CD8-positive, alpha-beta T cell (primary cell): ENCODE measurements at regions of chr6 and their contacts with region 1.

Region 1: DNA sequence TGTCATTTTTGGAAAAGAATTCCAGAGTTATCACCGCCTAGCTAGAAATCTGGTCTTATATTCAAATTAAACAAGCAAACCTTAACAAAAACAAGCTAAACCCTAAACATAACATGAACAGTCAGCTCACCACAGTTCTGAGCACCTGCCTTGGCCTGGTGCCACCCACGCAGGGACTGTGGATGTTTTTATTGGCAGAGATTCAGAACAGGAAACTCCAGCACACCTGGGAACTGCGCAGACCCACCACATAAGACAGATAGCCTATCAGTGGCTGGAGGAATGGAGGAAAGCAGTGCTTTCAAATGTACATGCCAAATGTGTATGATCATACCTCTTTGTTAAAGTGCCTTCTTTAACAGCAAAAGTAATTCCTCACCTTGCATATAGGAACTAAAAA is 8.9 kb downstream of the SLC16A10 start:
- DNase-seq: peak; percentile 30 to 78 (median 60)
- ATAC-seq: peak; percentile 90
- H3K4me3 ChIP-seq: no peak overlapping the region
- H3K4me3 Mint-ChIP-seq: peak overlapping the region; percentile 54
- H3K27ac ChIP-seq: peak overlapping the region; percentile 9 to 28
- H3K27ac Mint-ChIP-seq: peak overlapping the region; percentile 81
- H3K4me1 ChIP-seq: peaks cover 15% of the 10 kb centered on the region
- H3K4me1 Mint-ChIP-seq: peaks cover 47% of the 10 kb centered on the region
- H3K27me3 ChIP-seq: no peaks in the 10 kb centered on the region
- H3K27me3 Mint-ChIP-seq: no peaks in the 10 kb centered on the region
- CTCF ChIP-seq: no peak

Region 2: DNA sequence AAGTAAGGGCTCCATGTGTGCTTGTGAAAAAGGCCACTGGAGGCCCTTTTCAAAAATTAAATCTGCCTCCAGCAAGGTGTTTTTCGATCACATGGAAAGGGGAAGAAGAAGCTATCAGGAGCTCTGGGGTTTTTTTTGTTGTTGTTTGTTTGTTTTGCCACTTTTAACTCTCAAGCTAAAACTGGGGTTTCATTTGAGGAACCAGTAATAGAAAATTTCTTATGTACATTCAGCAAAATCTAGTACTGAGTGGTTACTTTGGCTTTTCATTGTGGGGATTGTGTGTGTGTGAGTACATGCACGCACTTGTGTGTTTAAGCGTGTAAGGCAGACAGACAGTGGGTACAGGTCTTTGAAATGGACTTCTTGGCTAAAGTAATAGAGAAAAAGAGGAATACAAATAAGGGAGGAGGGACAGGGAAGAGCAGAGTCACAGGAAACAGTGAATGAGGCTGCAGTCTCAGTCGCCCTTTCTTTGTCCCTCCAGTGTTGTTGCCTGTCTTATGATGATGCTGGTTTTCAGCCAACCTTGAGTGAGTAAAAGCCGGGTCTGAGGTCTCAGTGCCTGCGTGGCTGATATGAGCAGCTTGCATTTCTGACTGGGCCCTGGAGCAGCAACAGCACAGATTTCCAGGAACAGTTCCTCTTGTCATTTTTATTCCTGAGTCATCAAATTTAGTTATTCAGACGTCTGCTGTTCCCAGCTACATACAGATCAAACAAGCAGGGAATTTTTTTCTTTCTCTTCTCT is 17.3 kb after region 1 on chr6:
- CTCF ChIA-PET with region 1: interaction called, 3 read pairs
- POLR2A ChIA-PET with region 1: interaction called, 3 read pairs
- intact Hi-C with region 1: loop called in 1 of 2 experiments (anchors 2 kb)
- DNase-seq: peak in 4 of 9 experiments; percentile 20 to 47 (median 28)
- ATAC-seq: peak; percentile 53
- H3K4me3 ChIP-seq: peak overlapping the region in 1 of 2 experiments; percentile 1
- H3K4me3 Mint-ChIP-seq: peak overlapping the region; percentile 59
- H3K27ac ChIP-seq: peak overlapping the region; percentile 31 to 65
- H3K27ac Mint-ChIP-seq: peak overlapping the region; percentile 93
- H3K4me1 ChIP-seq: peaks cover 33% of the 10 kb centered on the region
- H3K4me1 Mint-ChIP-seq: peaks cover 49% of the 10 kb centered on the region
- H3K27me3 ChIP-seq: no peaks in the 10 kb centered on the region
- H3K27me3 Mint-ChIP-seq: no peaks in the 10 kb centered on the region
- CTCF ChIP-seq: no peak